ENCODE measurements at regions of chr5 and their contacts with region 1.

Region 1: GRCh38 chr5:100777680-100778281 is 125.3 kb downstream of the ST8SIA4 start:
- DNase-seq: peak; percentile 92 to 97 (median 96)
- H3K4me3 ChIP-seq: peak overlapping the region; percentile 0 to 69 (median 34)
- H3K4me3 Mint-ChIP-seq: peak overlapping the region; percentile 6 to 83
- H3K27ac ChIP-seq: peak overlapping the region; percentile 37 to 99
- H3K27ac Mint-ChIP-seq: peak overlapping the region; percentile 91 to 100 (median 97)
- H3K4me1 ChIP-seq: peaks cover 47 to 63% of the 10 kb centered on the region in 2 donors
- H3K4me1 Mint-ChIP-seq: peaks cover 55% of the 10 kb centered on the region
- H3K27me3 ChIP-seq: no peaks in the 10 kb centered on the region
- H3K27me3 Mint-ChIP-seq: peaks cover 0 to 7% (median 0%) of the 10 kb centered on the region in 3 donors
- CTCF ChIP-seq: no peak

Region 2: DNA sequence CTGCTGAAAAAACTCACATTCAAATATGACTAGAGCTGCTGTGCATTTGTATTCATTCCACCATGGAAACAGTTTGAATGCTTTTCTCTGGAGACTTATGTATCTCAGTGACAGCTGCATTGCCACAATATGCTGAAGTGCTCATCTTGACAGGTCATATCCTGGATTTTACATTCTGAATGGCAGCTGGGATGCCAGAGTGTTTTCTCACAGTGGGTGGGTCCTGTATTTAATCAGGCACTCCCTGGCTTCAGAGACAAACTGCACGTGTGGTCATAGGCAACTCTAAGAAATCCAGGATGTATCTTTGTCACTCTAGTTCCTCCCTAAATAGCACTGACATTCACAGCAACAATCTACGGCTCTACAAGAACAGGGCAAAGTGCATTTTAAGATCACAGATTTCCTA is 49.7 kb after region 1 on chr5:
- intact Hi-C with region 1: loop called in 1 of 2 experiments (anchors 10 kb)
- DNase-seq: peak; percentile 25 to 57 (median 26)
- H3K4me3 ChIP-seq: peak overlapping the region in 1 of 3 experiments; percentile 45
- H3K4me3 Mint-ChIP-seq: no peak overlapping the region
- H3K27ac ChIP-seq: peak overlapping the region in 1 of 2 donors; percentile 88
- H3K27ac Mint-ChIP-seq: peak overlapping the region; percentile 85 to 96 (median 90)
- H3K4me1 ChIP-seq: peaks cover 35 to 38% of the 10 kb centered on the region in 2 donors
- H3K4me1 Mint-ChIP-seq: peaks cover 33% of the 10 kb centered on the region
- H3K27me3 ChIP-seq: no peaks in the 10 kb centered on the region
- H3K27me3 Mint-ChIP-seq: peaks cover 0 to 2% (median 0%) of the 10 kb centered on the region in 3 donors
- CTCF ChIP-seq: no peak

Region 3: DNA sequence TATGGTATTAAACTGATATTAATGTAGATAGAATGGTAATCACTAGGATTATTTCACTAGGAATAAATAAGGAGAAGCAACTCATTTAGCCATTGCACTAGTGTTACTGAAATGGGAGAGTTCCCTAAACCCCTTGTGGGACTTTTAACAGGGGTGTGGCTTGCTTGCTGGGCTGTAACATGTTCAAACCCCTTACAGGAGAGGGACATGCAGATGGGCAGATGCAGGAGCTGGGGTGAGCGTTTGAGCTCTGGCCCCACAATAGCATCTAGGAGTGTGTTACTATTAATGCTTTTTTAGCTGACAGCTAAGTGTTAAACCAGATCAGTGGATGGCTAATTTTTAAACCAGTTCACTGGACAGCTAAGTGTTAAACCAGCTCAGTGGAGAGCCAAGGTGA is 214.6 kb after region 1 on chr5:
- intact Hi-C with region 1: no loop called
- DNase-seq: no peak
- H3K4me3 ChIP-seq: no peak overlapping the region
- H3K4me3 Mint-ChIP-seq: no peak overlapping the region
- H3K27ac ChIP-seq: no peak overlapping the region
- H3K27ac Mint-ChIP-seq: no peak overlapping the region
- H3K4me1 ChIP-seq: no peaks in the 10 kb centered on the region
- H3K4me1 Mint-ChIP-seq: no peaks in the 10 kb centered on the region
- H3K27me3 ChIP-seq: no peaks in the 10 kb centered on the region
- H3K27me3 Mint-ChIP-seq: peaks cover 0 to 2% (median 0%) of the 10 kb centered on the region in 3 donors
- CTCF ChIP-seq: no peak

Region 4: GRCh38 chr5:102380174-102380573 is 1602.4 kb after region 1 on chr5:
- intact Hi-C with region 1: no loop called
- DNase-seq: no peak
- H3K4me3 ChIP-seq: no peak overlapping the region
- H3K4me3 Mint-ChIP-seq: no peak overlapping the region
- H3K27ac ChIP-seq: no peak overlapping the region
- H3K27ac Mint-ChIP-seq: no peak overlapping the region
- H3K4me1 ChIP-seq: no peaks in the 10 kb centered on the region
- H3K4me1 Mint-ChIP-seq: no peaks in the 10 kb centered on the region
- H3K27me3 ChIP-seq: no peaks in the 10 kb centered on the region
- H3K27me3 Mint-ChIP-seq: no peaks in the 10 kb centered on the region
- CTCF ChIP-seq: no peak

Measured in CD14-positive monocyte (primary cell).